ENCODE measurements at regions of chr2 and their contacts with region 1.

Region 1: GRCh38 chr2:36785179-36785795 is 88.8 kb downstream of the VIT start:
- DNase-seq: peak; percentile 62
- ATAC-seq: peak; percentile 94
- H3K4me3 ChIP-seq: no peak overlapping the region
- H3K27ac ChIP-seq: no peak overlapping the region
- H3K4me1 ChIP-seq: 0 out of 4 replicates have a peak, but pooled peaks cover 0 to 3% of the 10 kb centered on the region in 2 experiments
- H3K27me3 ChIP-seq: no peaks in the 10 kb centered on the region; the same call in 1 of the 2 replicates
- CTCF ChIP-seq: peak; percentile 68 to 95 (median 94)
- POLR2A ChIP-seq: no peak
- RAD21 ChIP-seq: peak; percentile 70

Region 2: GRCh38 chr2:36770542-36771287 is 14.6 kb before region 1 on chr2:
- CTCF ChIA-PET with region 1: interaction called, 10 read pairs
- POLR2A ChIA-PET with region 1: no interaction called
- RAD21 ChIA-PET with region 1: no interaction called
- intact Hi-C with region 1: no loop called
- DNase-seq: peak; percentile 51
- ATAC-seq: peak; percentile 98
- H3K4me3 ChIP-seq: no peak overlapping the region
- H3K27ac ChIP-seq: no peak overlapping the region
- H3K4me1 ChIP-seq: no peaks in the 10 kb centered on the region
- H3K27me3 ChIP-seq: no peaks in the 10 kb centered on the region
- CTCF ChIP-seq: peak; percentile 93 to 95 (median 95)
- POLR2A ChIP-seq: no peak
- RAD21 ChIP-seq: peak; percentile 73

Region 3: GRCh38 chr2:37005118-37005868 is 220.0 kb after region 1 on chr2:
- CTCF ChIA-PET with region 1: no interaction called
- POLR2A ChIA-PET with region 1: no interaction called
- RAD21 ChIA-PET with region 1: no interaction called
- intact Hi-C with region 1: loop called (anchors 1 kb)
- DNase-seq: no peak
- ATAC-seq: peak; percentile 66
- H3K4me3 ChIP-seq: no peak overlapping the region
- H3K27ac ChIP-seq: no peak overlapping the region
- H3K4me1 ChIP-seq: no peaks in the 10 kb centered on the region
- H3K27me3 ChIP-seq: no peaks in the 10 kb centered on the region
- CTCF ChIP-seq: peak; percentile 30 to 45 (median 31); a peak in 3 of 6 replicates
- POLR2A ChIP-seq: no peak
- RAD21 ChIP-seq: peak; percentile 56; the same call in 1 of the 2 replicates

Region 4: DNA sequence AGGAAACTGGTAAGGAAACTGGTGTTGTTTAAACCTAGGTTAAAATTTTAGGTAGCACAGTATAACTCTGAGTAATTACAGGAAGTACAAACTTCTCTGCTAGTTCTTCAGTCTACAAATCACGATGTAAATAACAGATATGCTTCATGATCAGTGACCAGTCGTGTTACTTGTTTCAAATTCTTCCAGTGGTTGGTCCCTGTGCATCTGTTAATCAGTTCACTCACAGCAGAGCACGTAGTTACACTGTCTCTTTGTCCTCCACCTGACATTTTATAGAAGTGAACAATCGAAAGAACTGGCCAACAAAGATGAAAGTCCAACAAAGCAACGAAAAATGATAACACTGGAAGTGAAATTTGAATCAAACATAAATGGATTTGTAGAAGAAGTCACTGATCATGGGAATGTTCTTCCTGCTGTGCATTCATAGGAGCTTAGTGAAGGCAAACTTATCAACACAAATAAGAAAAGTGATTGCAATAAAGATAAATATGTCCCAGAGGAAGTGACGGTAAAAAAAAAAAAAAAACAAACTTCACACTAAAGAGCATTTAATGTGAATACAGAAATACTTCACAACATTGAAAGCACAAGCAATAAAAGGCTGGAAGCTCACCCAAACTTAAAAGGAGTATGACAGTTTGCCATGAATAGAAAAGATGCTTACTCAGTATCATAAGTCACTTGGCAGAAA is 364.5 kb after region 1 on chr2:
- CTCF ChIA-PET with region 1: no interaction called
- POLR2A ChIA-PET with region 1: no interaction called
- RAD21 ChIA-PET with region 1: no interaction called
- intact Hi-C with region 1: loop called (anchors 10 kb)
- DNase-seq: no peak
- ATAC-seq: no peak
- H3K4me3 ChIP-seq: no peak overlapping the region
- H3K27ac ChIP-seq: no peak overlapping the region
- H3K4me1 ChIP-seq: no peaks in the 10 kb centered on the region
- H3K27me3 ChIP-seq: no peaks in the 10 kb centered on the region
- CTCF ChIP-seq: no peak
- POLR2A ChIP-seq: no peak
- RAD21 ChIP-seq: no peak

Measured in HCT116 (cell line).